ENCODE measurements at regions of chr1 and their contacts with region 1.

Region 1: DNA sequence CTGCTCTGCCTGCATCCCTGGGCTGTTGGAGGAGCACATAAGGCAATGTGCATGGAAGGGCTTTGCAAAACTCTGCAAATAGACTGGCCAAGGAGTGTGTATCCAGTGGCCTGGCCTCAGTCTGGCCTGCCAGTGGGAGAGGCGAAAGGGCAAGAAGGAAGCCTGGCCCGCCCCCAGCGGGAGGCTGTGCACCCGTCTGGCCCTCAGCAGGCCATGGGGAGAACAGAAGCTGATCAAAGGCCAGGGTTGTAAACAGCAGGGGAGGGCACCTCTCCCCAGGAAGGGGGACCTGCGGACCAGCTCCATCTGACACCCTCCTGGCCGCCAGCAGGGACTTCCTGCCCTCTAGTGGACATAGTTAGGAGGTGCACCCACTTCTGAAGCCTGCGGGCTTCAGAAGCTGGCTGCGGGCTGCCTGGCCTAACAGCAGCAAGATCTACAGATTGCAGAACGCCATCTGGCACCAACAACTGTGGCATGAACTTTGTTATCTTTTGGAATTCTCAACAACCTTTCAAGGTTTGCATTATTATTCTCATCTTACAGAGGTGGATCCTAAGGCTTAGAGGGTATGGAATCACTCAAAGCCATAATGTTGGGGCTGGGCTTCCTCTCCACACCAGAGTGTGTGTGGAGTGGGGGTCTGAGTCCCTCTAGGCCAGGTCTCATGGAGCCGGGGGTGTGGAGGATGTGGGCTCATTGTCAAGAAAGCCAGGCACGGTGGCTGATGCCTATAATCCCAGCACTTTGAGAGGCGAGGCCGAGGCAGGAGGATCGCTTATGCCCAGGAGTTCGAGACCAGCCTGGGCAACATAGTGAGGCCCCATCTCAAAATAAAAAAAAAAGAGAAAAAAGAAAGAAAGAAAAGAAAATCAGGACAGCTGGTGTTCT is 18.9 kb upstream of the CDK18 start:
- DNase-seq: peak; percentile 46 to 56
- ATAC-seq: peak; percentile 67 to 85 (median 72)
- H3K4me3 ChIP-seq: no peak overlapping the region
- H3K27ac ChIP-seq: no peak overlapping the region
- H3K4me1 ChIP-seq: peaks cover 0 to 7% (median 0%) of the 10 kb centered on the region in 9 donors
- H3K27me3 ChIP-seq: peaks cover 0 to 36% (median 28%) of the 10 kb centered on the region in 7 donors
- CTCF ChIP-seq: peak in 8 of 9 donors; percentile 95 to 99 (median 96)

Region 2: DNA sequence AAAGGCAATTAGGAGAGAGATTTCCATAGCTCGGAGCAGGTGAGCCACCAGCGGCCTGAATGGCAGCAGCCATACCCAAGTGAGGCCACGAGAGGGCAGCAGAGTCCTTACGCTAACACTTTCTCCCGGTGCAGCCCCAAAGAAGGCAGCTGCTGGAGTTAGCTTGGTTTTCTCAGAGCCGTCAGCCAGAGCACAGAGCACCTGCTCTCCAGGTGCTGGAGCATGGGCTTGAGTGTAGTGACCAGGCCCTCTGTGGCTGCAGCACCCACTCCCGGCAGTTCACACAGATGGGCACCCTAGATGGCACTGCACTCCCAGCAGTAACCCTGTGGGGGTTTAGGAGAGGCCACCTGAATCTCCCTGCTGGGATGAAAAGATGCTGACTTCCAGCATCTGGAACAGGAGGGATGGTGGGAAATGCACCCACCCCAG is 212.0 kb before region 1 on chr1:
- intact Hi-C with region 1: loop called in 1 of 10 experiments (anchors 10 kb)
- DNase-seq: peak; percentile 81 to 82
- ATAC-seq: peak; percentile 43 to 89 (median 80)
- H3K4me3 ChIP-seq: no peak overlapping the region
- H3K27ac ChIP-seq: no peak overlapping the region
- H3K4me1 ChIP-seq: peaks cover 0 to 38% (median 18%) of the 10 kb centered on the region in 9 donors
- H3K27me3 ChIP-seq: no peaks in the 10 kb centered on the region
- CTCF ChIP-seq: peak; percentile 97 to 100 (median 99)

Region 3: GRCh38 chr1:205396967-205397616 is 88.5 kb before region 1 on chr1:
- intact Hi-C with region 1: loop called (anchors 1 to 5 kb)
- DNase-seq: peak in 1 of 2 donors; percentile 30
- ATAC-seq: peak in 6 of 8 donors; percentile 30 to 78 (median 50)
- H3K4me3 ChIP-seq: no peak overlapping the region
- H3K27ac ChIP-seq: no peak overlapping the region
- H3K4me1 ChIP-seq: no peaks in the 10 kb centered on the region
- H3K27me3 ChIP-seq: peaks cover 0 to 31% (median 12%) of the 10 kb centered on the region in 7 donors
- CTCF ChIP-seq: peak; percentile 53 to 84 (median 79)

Region 4: GRCh38 chr1:205440476-205441317 is 44.9 kb before region 1 on chr1:
- intact Hi-C with region 1: loop called in 5 of 10 experiments (anchors 5 kb)
- DNase-seq: peak in 1 of 2 donors; percentile 47
- ATAC-seq: peak in 7 of 8 donors; percentile 44 to 70 (median 52)
- H3K4me3 ChIP-seq: peak overlapping the region in 1 of 10 donors; percentile 27
- H3K27ac ChIP-seq: peak overlapping the region in 9 of 10 donors; percentile 1 to 74 (median 40)
- H3K4me1 ChIP-seq: peaks cover 13 to 74% (median 58%) of the 10 kb centered on the region in 9 donors
- H3K27me3 ChIP-seq: peaks cover 0 to 9% (median 0%) of the 10 kb centered on the region in 7 donors
- CTCF ChIP-seq: no peak

Region 5: GRCh38 chr1:205631727-205632373 is 146.3 kb after region 1 on chr1 and contains the start of gene ELK4:
- intact Hi-C with region 1: loop called in 1 of 10 experiments (anchors 10 kb)
- DNase-seq: peak; percentile 99
- ATAC-seq: peak; percentile 98 to 99 (median 99)
- H3K4me3 ChIP-seq: peak within 1 kb of the TSS; percentile 59 to 87 (median 71)
- H3K27ac ChIP-seq: peak within 1 kb of the TSS; percentile 87 to 98 (median 94)
- H3K4me1 ChIP-seq: peaks cover 0 to 55% (median 33%) of the 10 kb centered on the region in 9 donors
- H3K27me3 ChIP-seq: no peaks in the 10 kb centered on the region
- CTCF ChIP-seq: peak; percentile 57 to 90 (median 79)
- total RNA-seq, gene ELK4: 34.2 to 45.6 (median 40.2) TPM

Measured in heart right ventricle (tissue), 16 donors.